GM10248 (cell line): ENCODE measurements at regions of chr9 and their contacts with region 1.

Region 1: GRCh38 chr9:73200694-73201452 is 49.2 kb downstream of the ANXA1 start:
- DNase-seq: peak; percentile 12
- CTCF ChIP-seq: peak; percentile 22

Region 2: GRCh38 chr9:73183917-73184861 is 16.7 kb before region 1 on chr9:
- CTCF ChIA-PET with region 1: interaction called, 11 read pairs
- POLR2A ChIA-PET with region 1: no interaction called
- DNase-seq: peak; percentile 18
- CTCF ChIP-seq: peak; percentile 22

Region 3: GRCh38 chr9:73215249-73215648 is 14.4 kb after region 1 on chr9:
- CTCF ChIA-PET with region 1: interaction called, 22 read pairs
- POLR2A ChIA-PET with region 1: no interaction called
- DNase-seq: no peak
- CTCF ChIP-seq: no peak

Region 4: GRCh38 chr9:73565833-73566465 is 365.1 kb after region 1 on chr9:
- CTCF ChIA-PET with region 1: interaction called, 21 read pairs
- POLR2A ChIA-PET with region 1: no interaction called
- DNase-seq: no peak
- CTCF ChIP-seq: peak; percentile 33